Mucosa of descending colon (tissue), 3 donors: ENCODE measurements at regions of chr16 and their contacts with region 1.

Region 1: GRCh38 chr16:71412270-71413160 is 29.3 kb downstream of the TLE7 start:
- DNase-seq: peak in 2 of 3 donors; percentile 60 to 83
- ATAC-seq: peak; percentile 92
- H3K4me3 ChIP-seq: no peak overlapping the region
- H3K4me1 ChIP-seq: no peaks in the 10 kb centered on the region
- CTCF ChIP-seq: peak; percentile 80

Region 2: GRCh38 chr16:71499775-71500364 is 87.4 kb after region 1 on chr16:
- intact Hi-C with region 1: loop called (anchors 2 to 5 kb)
- DNase-seq: peak in 1 of 3 donors; percentile 69
- ATAC-seq: peak; percentile 70
- H3K4me3 ChIP-seq: no peak overlapping the region
- H3K4me1 ChIP-seq: no peaks in the 10 kb centered on the region
- CTCF ChIP-seq: peak; percentile 35

Region 3: DNA sequence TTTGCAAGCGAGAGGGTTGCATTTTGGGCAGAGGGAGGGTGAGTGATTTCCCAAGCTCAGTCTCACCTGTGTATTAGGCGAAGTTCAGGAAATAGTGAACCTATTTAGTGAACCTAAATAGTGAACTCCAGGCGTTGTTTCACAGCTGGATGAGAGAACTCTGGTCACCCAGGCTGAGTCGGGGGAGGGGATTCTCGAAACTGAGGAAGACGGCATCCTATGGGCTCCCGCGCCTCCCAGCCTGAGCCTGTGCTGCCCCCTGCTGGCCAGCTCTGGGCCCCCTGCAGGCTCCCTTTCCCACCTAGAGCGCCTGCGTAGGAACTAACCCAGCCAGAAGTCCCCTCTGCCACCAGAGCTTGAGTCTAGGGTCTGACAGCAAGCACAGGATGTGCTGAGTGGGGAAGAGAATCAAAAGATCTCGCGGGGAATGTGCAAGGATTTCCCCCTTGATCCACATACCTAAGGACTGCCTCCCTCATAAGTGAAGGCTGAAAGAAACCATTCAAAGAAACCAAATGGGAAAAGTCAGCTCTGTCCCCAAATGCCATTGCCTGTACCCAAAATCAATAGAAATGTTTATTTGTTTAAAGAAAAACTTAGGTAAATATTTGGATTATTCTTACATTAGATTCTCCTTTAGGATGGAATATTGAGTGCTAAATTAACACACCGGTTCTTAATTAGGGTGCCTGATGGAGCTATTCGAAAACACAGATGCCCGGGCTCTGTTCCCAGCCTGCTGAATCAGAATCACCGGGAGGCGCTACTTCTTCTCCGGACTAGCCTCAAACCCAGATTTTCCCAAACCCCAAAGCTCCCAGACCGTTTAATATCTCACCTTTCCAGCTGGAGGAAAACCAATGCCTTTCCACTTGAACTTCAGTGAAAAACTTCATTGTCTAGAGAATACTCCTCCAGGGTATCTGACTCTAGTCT is 198.7 kb after region 1 on chr16:
- intact Hi-C with region 1: loop called in 1 of 2 experiments (anchors 5 kb)
- DNase-seq: peak; percentile 71 to 86 (median 85)
- ATAC-seq: peak; percentile 98
- H3K4me3 ChIP-seq: no peak overlapping the region
- H3K4me1 ChIP-seq: no peaks in the 10 kb centered on the region
- CTCF ChIP-seq: peak; percentile 92